RWPE1 (cell line): ENCODE measurements at regions of chr11 and their contacts with region 1.

Region 1: GRCh38 chr11:71580057-71581003 is 2.3 kb downstream of the KRTAP5-11 start:
- DNase-seq: peak; percentile 61
- H3K27ac ChIP-seq: no peak overlapping the region
- CTCF ChIP-seq: peak; percentile 89

Region 2: GRCh38 chr11:71251761-71252443 is 328.4 kb before region 1 on chr11:
- CTCF ChIA-PET with region 1: no interaction called
- POLR2A ChIA-PET with region 1: no interaction called
- DNase-seq: peak; percentile 34
- H3K27ac ChIP-seq: peak overlapping the region; percentile 76
- CTCF ChIP-seq: peak; percentile 80

Region 3: GRCh38 chr11:72391638-72392423 is 811.5 kb after region 1 on chr11:
- CTCF ChIA-PET with region 1: interaction called, 10 read pairs
- POLR2A ChIA-PET with region 1: no interaction called
- DNase-seq: no peak
- H3K27ac ChIP-seq: no peak overlapping the region
- CTCF ChIP-seq: no peak